ENCODE measurements at regions of chr1 and their contacts with region 1.

Region 1: GRCh38 chr1:43008115-43009060 is 49.7 kb upstream of the SLC2A1 start:
- DNase-seq: peak; percentile 93
- ATAC-seq: peak; percentile 75
- H3K4me3 ChIP-seq: peak overlapping the region; percentile 19 to 57 (median 28)
- H3K27ac ChIP-seq: peak overlapping the region; percentile 55
- H3K4me1 ChIP-seq: peaks cover 58% of the 10 kb centered on the region
- H3K27me3 ChIP-seq: no peaks in the 10 kb centered on the region
- CTCF ChIP-seq: no peak
- EP300 ChIP-seq: peak in 1 of 2 experiments; percentile 64; a peak in 2 of 4 replicates
- POLR2A ChIP-seq: no peak
- RAD21 ChIP-seq: no peak

Region 2: DNA sequence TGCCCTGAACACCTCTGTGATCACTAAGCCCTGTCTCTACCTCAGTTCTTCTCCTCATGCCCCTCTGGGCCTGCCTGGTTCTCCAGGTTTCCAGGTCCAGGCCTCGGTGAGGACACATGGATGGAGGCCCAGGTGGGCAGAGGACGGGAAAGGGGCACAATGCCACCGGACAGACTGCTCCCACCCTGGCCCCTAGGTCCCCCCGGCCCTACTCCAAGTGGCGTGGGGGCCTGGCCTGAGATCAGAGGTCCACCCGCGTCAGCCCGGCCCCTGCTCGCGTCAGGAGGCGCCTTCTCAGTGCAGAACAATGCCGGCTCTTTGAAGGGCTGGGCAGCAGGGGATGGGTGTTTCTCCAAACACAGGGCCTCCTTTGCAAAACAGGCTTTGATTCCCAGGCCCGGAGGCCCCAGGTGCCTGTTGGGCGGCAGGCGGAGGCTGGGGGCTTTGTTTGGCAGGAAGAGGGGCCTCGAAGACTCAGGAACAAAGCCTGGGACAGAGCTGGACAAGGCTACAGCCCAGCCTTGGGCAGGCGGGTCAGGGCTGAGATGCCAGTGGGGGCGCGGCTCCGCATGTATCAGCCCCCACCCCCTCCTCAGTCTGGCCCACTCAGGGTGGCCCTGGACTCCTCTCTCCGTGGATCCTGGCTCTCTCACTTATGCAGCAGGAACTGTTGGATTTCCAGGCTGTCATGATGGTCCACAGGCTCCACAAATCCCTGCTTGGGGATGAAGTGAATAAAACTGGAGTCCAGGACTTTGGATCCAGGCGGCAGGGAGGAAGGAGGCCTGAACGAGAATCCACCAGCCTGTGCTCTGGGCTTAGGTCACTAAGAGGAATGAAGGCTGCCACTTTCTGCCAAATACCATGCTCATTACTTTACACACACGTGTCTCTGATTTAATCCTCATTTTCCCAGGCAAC is 27.7 kb after region 1 on chr1:
- CTCF ChIA-PET with region 1: no interaction called
- POLR2A ChIA-PET with region 1: interaction called, 23 read pairs
- in situ Hi-C with region 1: no loop called
- intact Hi-C with region 1: loop called (anchors 5 kb)
- DNase-seq: peak; percentile 93
- ATAC-seq: peak; percentile 75
- H3K4me3 ChIP-seq: peak overlapping the region in 2 of 3 experiments; percentile 44 to 68; a peak in 5 of 6 replicates
- H3K27ac ChIP-seq: peak overlapping the region; percentile 91
- H3K4me1 ChIP-seq: peaks cover 93% of the 10 kb centered on the region
- H3K27me3 ChIP-seq: no peaks in the 10 kb centered on the region
- CTCF ChIP-seq: peak; percentile 31; the same call in 1 of the 2 replicates
- EP300 ChIP-seq: peak in 1 of 2 experiments; percentile 96; a peak in 3 of 4 replicates
- POLR2A ChIP-seq: peak in 1 of 2 experiments; percentile 49; a peak in 2 of 4 replicates
- RAD21 ChIP-seq: no peak